Activated CD4-positive, alpha-beta memory T cell treated with anti-CD3 and anti-CD28 coated beads for 36 hours (primary cell): ENCODE measurements at regions of chr21 and their contacts with region 1.

Region 1: DNA sequence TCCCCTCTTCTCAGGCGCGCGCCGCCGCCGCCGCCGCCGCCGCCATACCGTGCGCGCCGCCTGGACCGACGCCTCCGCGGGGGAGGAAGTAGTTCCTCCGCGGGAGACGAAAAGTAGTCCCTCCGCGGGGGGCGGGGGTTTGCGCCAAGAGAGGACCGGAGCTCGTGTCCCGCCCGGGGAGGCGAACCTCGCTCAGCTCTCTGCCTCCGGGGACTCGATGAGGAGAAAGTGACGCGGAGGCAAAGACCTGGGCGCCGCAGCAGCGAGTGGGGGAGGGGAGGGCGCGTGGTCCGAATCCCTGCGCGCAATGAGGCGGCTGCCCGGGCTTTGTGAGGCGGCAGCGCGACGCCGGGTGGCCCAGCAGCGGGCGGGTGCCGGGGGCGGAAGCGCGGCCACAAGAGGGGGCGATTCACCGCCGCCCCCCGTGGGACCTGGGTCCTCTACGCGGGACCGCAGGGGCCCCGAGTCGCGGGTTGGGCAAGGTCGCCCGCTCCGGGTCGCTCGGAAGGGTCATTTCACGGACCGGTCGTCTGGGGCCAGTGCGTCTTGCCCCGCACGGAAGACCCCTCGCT is at the start of gene BRWD1:
- DNase-seq: peak; percentile 80
- H3K4me3 Mint-ChIP-seq: peak within 1 kb of the TSS; percentile 92
- H3K27ac Mint-ChIP-seq: peak within 1 kb of the TSS; percentile 97
- H3K4me1 Mint-ChIP-seq: peaks cover 36% of the 10 kb centered on the region
- H3K27me3 Mint-ChIP-seq: no peaks in the 10 kb centered on the region
- total RNA-seq, gene BRWD1: 28.7 to 29.4 TPM

Region 2: GRCh38 chr21:39183237-39184007 is 130.2 kb before region 1 on chr21 and contains the start of gene PSMG1:
- CTCF ChIA-PET with region 1: no interaction called
- POLR2A ChIA-PET with region 1: interaction called, 22 read pairs
- intact Hi-C with region 1: loop called (anchors 1 kb)
- DNase-seq: peak; percentile 95
- H3K4me3 Mint-ChIP-seq: peak within 1 kb of the TSS; percentile 98
- H3K27ac Mint-ChIP-seq: peak within 1 kb of the TSS; percentile 94
- H3K4me1 Mint-ChIP-seq: peaks cover 63% of the 10 kb centered on the region
- H3K27me3 Mint-ChIP-seq: no peaks in the 10 kb centered on the region
- total RNA-seq, gene PSMG1: 82.3 to 85.9 TPM

Region 3: GRCh38 chr21:39349211-39350093 is 35.8 kb after region 1 on chr21:
- CTCF ChIA-PET with region 1: interaction called, 6 read pairs
- POLR2A ChIA-PET with region 1: interaction called, 56 read pairs
- intact Hi-C with region 1: loop called (anchors 1 kb)
- DNase-seq: peak; percentile 98
- H3K4me3 Mint-ChIP-seq: peak overlapping the region; percentile 98
- H3K27ac Mint-ChIP-seq: peak overlapping the region; percentile 100
- H3K4me1 Mint-ChIP-seq: peaks cover 31% of the 10 kb centered on the region
- H3K27me3 Mint-ChIP-seq: peaks cover 2% of the 10 kb centered on the region

Region 4: DNA sequence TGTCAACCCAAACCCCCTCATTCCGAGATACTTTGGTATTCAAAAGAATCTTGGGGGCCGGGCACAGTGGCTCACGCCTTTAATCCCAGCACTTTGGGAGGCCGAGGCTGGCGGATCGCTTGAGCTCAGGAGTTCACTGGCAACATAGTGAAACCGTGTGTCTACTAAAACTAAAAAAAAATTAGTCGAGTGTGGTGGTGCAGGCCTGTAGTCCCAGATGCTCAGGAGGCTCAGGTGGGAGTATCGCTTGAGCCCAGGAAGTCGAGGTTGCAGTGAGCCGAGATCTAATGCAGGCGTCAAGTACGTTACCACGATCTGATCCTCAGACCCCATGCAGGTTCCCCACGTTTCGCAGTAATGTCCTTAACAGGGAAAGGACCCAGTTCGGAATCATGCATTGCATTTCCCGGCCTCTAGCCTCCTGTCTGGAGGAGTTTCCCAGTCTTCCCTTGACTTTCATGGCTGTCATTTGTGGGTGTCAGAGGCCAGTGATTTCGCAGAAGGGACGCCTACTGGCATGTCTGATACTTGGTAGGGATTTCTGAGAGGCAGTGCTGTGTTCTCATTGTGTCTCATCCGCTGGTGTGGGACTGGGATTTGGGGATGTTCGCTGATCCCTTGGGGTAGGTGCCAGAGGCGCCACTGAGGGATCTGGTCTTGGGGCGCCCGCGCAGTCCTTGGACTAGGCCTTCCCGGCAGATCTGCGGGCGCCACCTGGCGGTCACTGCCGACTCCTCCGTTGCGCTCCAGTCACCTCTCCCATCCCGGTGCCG is 74.6 kb after region 1 on chr21:
- CTCF ChIA-PET with region 1: interaction called, 4 read pairs
- POLR2A ChIA-PET with region 1: interaction called, 8 read pairs
- intact Hi-C with region 1: loop called (anchors 1 kb)
- DNase-seq: peak; percentile 92
- H3K4me3 Mint-ChIP-seq: peak overlapping the region; percentile 80
- H3K27ac Mint-ChIP-seq: peak overlapping the region; percentile 87
- H3K4me1 Mint-ChIP-seq: peaks cover 32% of the 10 kb centered on the region
- H3K27me3 Mint-ChIP-seq: no peaks in the 10 kb centered on the region